IMR-90 (cell line): ENCODE measurements at regions of chr22 and their contacts with region 1.

Region 1: DNA sequence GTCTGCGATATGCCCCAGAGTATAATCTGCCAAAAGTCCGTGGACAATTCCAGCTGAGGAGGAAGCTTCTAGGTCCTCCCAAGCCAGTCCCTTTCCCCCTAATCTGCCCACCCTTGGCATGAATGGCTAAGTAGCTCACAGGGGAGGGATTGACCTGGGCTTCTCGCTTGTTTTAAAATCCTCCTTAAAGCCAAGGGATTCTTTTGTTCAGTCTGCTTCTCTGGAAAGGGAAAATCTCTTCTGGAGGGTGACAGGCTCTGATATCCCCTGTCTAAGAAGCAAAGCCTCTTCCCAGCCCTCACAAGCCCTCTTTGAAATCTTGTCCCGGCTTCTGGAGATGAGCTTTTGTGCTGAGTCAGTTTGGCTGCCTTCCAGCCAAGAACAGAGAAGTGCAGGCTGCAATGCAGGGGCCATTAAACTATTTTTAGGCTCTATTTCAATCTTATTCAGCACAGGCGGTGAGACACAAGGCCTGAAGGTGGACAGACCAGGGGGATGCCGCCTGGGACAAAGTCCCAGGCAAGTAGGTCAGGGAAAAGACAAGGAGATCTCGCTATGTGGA is 23.9 kb downstream of the NEFH start:
- DNase-seq: peak; percentile 79
- ATAC-seq: peak; percentile 92
- H3K4me3 ChIP-seq: no peak overlapping the region
- H3K27ac ChIP-seq: peak overlapping the region; percentile 19; the same call in 1 of the 2 replicates
- H3K4me1 ChIP-seq: peaks cover 3% of the 10 kb centered on the region; the same call in 1 of the 2 replicates
- H3K27me3 ChIP-seq: no peaks in the 10 kb centered on the region
- CTCF ChIP-seq: no peak
- POLR2A ChIP-seq: no peak
- RAD21 ChIP-seq: no peak

Region 2: DNA sequence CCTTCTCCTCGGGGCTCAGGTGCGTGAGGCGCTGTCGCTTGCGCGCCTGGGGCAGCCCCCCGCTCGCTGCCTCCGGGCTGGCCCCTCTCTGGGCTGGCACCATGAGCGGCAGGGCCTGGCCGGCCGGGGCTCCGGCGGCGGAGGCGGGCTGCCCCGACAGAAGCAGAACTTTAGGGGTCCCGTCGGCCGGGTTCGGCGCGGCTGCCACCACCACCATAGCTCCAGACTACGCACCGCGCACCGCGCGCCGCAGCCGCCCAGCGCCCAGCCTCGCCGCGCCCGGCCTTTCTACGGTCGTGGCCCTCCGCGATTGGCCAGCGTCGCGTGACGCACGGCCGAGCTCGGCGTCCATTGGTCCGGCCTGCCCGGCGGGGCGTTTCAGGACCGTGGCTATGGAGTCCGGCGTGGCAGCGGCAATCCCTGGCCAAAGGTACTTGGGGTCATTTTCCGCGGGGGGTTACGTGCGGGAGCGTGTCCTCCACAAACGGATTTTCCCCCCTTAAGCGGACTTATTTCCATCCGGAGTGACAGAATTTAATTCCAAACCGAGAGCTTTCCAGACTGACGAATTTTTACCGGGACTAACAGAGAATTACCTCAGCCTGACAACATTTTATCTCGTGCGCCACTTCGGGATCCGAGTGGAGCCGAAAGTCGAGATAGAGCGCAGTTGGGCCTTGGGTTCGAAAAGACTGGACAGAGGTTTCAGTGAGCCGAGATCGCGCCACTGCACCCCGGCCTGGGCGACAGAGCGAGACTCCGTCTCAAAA is 703.4 kb before region 1 on chr22 and contains the start of gene XBP1:
- CTCF ChIA-PET with region 1: no interaction called
- POLR2A ChIA-PET with region 1: no interaction called
- dilution Hi-C with region 1: no loop called
- in situ Hi-C with region 1: no loop called
- intact Hi-C with region 1: no loop called
- DNase-seq: peak; percentile 93
- ATAC-seq: peak; percentile 97
- H3K4me3 ChIP-seq: peak within 1 kb of the TSS; percentile 91
- H3K27ac ChIP-seq: peak within 1 kb of the TSS; percentile 87
- H3K4me1 ChIP-seq: no peaks in the 10 kb centered on the region
- H3K27me3 ChIP-seq: no peaks in the 10 kb centered on the region
- CTCF ChIP-seq: no peak
- POLR2A ChIP-seq: peak; percentile 98
- RAD21 ChIP-seq: no peak
- total RNA-seq, gene XBP1: 195 and 223 TPM in 2 replicates

Region 3: GRCh38 chr22:29394931-29395581 is 108.8 kb before region 1 on chr22:
- CTCF ChIA-PET with region 1: no interaction called
- POLR2A ChIA-PET with region 1: no interaction called
- dilution Hi-C with region 1: no loop called
- in situ Hi-C with region 1: loop called (anchors 10 kb)
- intact Hi-C with region 1: loop called (anchors 1 kb)
- DNase-seq: peak; percentile 72
- ATAC-seq: peak; percentile 100
- H3K4me3 ChIP-seq: no peak overlapping the region
- H3K27ac ChIP-seq: no peak overlapping the region
- H3K4me1 ChIP-seq: no peaks in the 10 kb centered on the region
- H3K27me3 ChIP-seq: peaks cover 11% of the 10 kb centered on the region
- CTCF ChIP-seq: peak; percentile 92
- POLR2A ChIP-seq: no peak
- RAD21 ChIP-seq: peak; percentile 91

Region 4: DNA sequence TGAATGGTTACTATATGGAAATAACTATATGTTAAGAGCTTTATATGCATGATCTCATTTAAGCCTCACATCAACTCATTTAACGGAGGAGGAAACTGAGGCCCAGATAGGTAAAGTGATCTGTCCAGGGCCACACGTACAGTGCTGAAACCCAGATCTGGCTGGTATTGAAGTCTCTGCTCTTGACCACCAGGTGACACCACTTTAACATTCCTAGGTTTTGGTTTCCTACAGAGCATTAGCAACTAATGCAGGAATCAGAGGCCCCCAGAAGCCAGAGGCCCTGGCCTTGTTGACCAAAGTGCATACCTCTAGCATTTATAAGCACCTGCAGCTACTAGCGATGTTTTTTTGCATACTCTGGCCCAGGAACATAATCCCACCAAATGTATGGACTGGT is 1695.3 kb after region 1 on chr22:
- CTCF ChIA-PET with region 1: no interaction called
- POLR2A ChIA-PET with region 1: interaction called, 11 read pairs
- dilution Hi-C with region 1: no loop called
- in situ Hi-C with region 1: no loop called
- intact Hi-C with region 1: no loop called
- DNase-seq: no peak
- ATAC-seq: no peak
- H3K4me3 ChIP-seq: no peak overlapping the region
- H3K27ac ChIP-seq: no peak overlapping the region
- H3K4me1 ChIP-seq: no peaks in the 10 kb centered on the region
- H3K27me3 ChIP-seq: no peaks in the 10 kb centered on the region
- CTCF ChIP-seq: no peak
- POLR2A ChIP-seq: no peak
- RAD21 ChIP-seq: no peak